ENCODE measurements at regions of chr13 and their contacts with region 1.

Region 1: DNA sequence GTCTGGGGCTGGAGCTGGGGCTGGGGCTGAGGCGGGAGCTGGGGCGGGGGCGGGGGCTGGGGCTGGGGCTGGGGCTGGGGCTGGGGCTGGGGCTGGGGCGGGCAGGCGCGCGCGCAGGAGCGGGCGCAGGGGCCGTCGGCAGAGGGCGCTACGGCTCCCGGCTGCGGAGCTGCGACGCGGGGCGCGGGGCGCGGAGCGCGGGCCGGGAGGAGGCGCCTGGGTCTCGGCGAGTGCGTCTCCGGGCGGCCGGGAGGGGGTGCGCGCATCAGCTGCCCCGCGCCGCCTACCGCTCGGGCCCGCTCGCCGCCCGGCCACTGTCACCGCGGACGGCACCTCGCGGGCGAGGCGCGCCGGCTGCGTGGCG is 422 bp upstream of the MTUS2 start:
- DNase-seq: no peak

Region 2: DNA sequence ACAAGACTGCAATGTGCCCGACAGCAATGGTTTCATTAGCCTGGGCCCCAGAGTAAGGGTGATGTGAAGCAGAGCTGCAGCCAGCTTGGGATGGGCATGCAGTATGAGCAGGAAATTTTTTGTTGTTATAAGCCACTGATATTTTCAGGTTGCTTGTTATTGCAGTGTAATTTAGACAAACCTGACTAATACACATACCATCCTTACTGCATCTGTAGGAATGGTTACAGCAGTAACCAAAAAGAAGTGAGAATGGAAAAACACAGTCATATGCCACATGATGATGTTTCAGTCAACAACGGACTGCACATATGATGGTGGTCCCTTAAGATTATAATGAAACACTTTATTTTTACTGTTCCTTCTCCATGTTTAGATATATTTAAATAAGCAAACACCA is 169.4 kb before region 1 on chr13:
- intact Hi-C with region 1: no loop called
- DNase-seq: no peak

Region 3: GRCh38 chr13:28958018-28958417 is 138.3 kb after region 1 on chr13:
- intact Hi-C with region 1: loop called (anchors 2 kb)
- DNase-seq: no peak

Region 4: DNA sequence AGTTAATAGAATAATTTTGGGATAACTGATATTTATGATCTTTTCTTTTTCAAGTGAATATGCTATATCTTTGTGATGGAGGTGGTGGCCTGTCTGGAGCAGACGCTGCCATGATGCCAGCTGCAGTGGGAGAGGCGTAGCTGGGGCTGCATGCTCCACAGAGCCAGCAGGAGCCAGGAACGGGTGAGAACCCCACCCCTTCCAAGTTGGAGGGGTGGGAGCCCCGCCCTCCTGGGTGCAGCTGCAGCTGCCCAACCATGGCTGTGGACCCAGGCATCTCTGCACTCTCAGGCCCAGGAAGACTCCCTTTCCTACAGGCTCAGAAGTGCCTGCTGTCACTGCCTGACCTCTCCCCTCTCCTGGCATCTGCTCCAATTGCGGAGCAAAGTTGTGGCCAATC is 402.7 kb after region 1 on chr13:
- intact Hi-C with region 1: no loop called
- DNase-seq: no peak

Region 5: DNA sequence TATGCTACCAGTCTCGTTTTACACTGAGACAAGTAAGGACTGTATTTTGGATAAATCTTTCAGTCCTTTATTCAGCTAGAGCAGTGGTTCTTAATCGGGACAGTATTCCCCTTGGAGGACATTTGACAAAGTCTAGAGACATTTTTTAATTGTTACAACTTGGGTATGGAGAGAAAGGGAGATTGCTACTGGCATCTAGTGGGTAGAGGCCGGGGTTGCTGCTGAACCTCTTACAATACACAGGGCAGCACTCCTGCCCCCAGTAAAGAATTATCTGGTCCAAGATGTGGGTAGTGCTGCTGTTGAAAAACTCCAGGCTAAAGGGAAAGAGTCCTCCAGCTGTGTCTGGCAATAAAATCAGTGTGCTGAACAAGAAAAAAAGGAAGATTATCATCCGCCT is 441.0 kb after region 1 on chr13:
- intact Hi-C with region 1: loop called (anchors 5 kb)
- DNase-seq: no peak

Region 6: DNA sequence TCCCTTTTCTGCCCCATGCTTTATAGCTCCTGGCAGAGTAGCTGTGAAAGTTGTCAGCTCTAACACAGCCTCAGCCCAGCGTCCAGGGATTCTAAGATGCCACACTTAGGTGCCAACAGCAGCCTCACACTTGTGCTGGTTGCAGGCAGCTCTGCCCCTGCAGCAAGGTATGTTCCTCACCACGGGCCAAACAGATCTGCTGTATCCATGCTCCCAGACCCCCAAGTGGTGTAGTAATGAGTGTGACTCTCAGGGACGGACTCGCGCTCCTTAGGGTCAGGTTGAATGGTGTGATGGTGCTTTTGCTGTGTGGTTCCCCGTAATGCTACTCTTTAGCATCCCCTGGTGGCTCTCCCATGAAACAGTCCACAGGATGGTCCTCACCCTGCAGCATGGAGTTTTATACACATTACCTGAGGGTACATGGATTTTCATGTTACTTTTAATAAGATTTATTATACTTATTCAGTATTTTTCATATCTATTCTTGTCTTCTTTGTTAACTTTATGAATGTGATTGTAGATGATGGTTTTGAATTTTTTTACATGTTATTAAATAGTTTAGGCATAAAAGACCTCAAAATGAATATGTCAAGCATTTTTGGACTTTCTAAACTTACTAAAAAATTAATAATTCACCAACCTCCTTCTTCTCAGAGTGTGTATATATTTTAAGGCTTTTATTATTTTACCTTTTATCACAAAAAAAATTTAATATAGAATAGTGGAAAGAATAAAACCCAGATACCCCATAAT is 543.3 kb after region 1 on chr13:
- intact Hi-C with region 1: loop called (anchors 5 kb)
- DNase-seq: no peak

Measured in cardiac septum (tissue), 1 donor.